Activated CD4-positive, alpha-beta T cell treated with anti-CD3 and anti-CD28 coated beads for 36 hours (primary cell): ENCODE measurements at regions of chr2 and their contacts with region 1.

Region 1: GRCh38 chr2:86274918-86275275 is 62.5 kb downstream of the REEP1 start:
- DNase-seq: no peak
- ATAC-seq: peak; percentile 37
- H3K4me3 Mint-ChIP-seq: no peak overlapping the region
- H3K27ac Mint-ChIP-seq: no peak overlapping the region
- H3K4me1 Mint-ChIP-seq: peaks cover 18% of the 10 kb centered on the region
- H3K27me3 Mint-ChIP-seq: peaks cover 6% of the 10 kb centered on the region

Region 2: DNA sequence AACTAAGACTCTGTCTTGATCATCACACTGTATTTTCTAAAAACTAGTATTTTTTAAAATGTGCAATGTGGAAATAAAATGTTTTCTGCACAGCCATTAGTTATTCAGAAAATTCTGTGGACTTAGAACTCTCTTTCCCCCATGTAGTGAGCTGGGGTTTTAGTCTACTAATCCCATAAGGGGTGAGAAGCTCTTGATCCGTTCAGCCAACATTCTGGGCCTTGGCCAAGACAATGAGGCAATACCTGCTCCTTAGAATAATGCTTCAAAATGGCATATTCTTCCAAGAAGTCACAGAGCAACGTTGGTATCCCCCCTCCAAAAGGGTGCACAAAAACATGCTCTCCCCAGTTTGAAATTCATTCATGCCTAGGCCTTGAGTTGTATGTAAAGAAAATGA is 58.5 kb after region 1 on chr2:
- CTCF ChIA-PET with region 1: no interaction called
- POLR2A ChIA-PET with region 1: no interaction called
- intact Hi-C with region 1: no loop called
- DNase-seq: no peak
- ATAC-seq: no peak
- H3K4me3 Mint-ChIP-seq: no peak overlapping the region
- H3K27ac Mint-ChIP-seq: no peak overlapping the region
- H3K4me1 Mint-ChIP-seq: peaks cover 14% of the 10 kb centered on the region
- H3K27me3 Mint-ChIP-seq: peaks cover 28% of the 10 kb centered on the region

Region 3: DNA sequence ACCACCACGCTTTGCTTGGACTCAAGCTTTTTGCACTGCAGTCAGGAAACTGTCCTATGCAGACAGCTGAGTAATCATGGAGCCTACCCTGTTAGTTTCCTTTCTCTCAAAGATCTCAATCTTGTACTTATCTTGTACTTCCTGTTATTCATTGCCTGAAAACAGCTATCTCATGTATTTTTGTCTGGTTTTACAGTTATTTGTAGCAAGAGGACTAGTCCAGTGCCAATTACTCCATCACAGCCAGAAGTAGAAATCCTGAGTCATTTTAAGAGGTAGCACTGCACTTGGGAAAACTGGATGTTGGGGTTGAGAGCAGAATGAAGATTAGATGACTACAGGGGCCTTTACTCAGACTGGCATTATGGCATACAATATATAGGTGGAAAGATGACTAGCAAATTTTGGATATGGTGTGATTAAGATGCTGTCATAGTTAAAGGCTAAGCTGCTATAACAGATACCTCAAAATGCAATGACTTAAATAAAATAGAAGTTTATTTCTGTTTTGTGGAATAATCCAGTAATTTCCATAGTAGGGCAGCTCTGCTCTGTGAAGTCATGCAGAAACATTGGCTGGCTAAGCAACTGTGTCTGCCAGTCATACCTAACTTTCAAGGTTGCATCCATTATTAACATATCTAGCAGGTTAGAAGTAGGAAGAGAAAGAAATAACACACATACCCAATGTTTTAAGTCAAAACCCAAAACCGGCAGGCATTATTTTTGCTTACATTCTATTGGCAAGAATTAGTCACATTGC is 309.4 kb after region 1 on chr2:
- CTCF ChIA-PET with region 1: no interaction called
- POLR2A ChIA-PET with region 1: no interaction called
- intact Hi-C with region 1: loop called in 1 of 2 experiments (anchors 1 kb)
- DNase-seq: peak; percentile 16
- ATAC-seq: peak; percentile 88
- H3K4me3 Mint-ChIP-seq: no peak overlapping the region
- H3K27ac Mint-ChIP-seq: peak overlapping the region; percentile 74
- H3K4me1 Mint-ChIP-seq: peaks cover 20% of the 10 kb centered on the region
- H3K27me3 Mint-ChIP-seq: no peaks in the 10 kb centered on the region